Activated naive CD4-positive, alpha-beta T cell treated with anti-CD3 and anti-CD28 coated beads for 36 hours (primary cell): ENCODE measurements at regions of chr4 and their contacts with region 1.

Region 1: DNA sequence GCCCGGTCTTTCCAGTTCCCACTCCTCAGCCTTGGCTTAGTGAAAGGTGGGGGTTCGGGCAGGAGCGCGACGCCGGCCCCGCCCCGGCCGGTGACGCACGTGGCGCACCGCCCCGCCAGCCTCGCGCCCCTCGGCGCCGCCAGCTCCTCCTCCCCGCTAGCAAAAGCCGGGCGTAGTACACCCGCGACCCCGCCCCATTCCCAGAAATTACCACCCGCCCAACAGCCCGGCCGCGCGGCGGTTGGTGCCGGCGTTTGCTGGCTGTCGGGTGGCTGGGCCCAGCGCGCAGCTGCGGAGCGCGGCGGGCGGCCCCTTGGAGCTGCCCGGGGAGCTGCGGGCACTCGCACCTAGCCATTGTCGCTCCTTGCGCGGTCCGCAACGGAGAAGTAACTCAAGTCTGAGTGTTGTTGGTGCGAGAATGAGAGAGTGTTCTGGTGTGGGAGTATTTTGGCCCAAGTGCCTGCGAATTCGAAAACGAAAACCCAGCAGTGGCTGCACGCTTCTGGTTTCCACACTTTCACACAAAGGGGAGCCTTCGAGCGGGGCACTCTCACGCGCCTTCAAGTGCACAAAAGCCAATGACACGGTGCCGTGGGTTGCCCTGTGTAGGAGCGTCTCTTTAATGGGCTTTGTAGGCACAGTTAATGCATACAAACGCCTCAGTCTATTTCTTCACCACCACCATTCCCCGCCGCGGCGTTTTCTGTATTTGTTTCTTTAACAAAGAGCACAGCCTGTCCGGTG is 1.0 kb upstream of the ELF2 start:
- DNase-seq: peak; percentile 95
- H3K4me3 Mint-ChIP-seq: peak overlapping the region; percentile 84
- H3K27ac Mint-ChIP-seq: peak overlapping the region; percentile 63
- H3K4me1 Mint-ChIP-seq: peaks cover 13% of the 10 kb centered on the region
- H3K27me3 Mint-ChIP-seq: peaks cover 5% of the 10 kb centered on the region

Region 2: GRCh38 chr4:139030614-139031235 is 147.3 kb before region 1 on chr4:
- CTCF ChIA-PET with region 1: interaction called, 4 read pairs
- intact Hi-C with region 1: loop called (anchors 5 kb)
- DNase-seq: peak; percentile 90
- H3K4me3 Mint-ChIP-seq: no peak overlapping the region
- H3K27ac Mint-ChIP-seq: no peak overlapping the region
- H3K4me1 Mint-ChIP-seq: peaks cover 11% of the 10 kb centered on the region
- H3K27me3 Mint-ChIP-seq: no peaks in the 10 kb centered on the region

Region 3: GRCh38 chr4:139223682-139224317 is 45.8 kb after region 1 on chr4:
- CTCF ChIA-PET with region 1: no interaction called
- intact Hi-C with region 1: loop called (anchors 2 kb)
- DNase-seq: peak; percentile 52
- H3K4me3 Mint-ChIP-seq: no peak overlapping the region
- H3K27ac Mint-ChIP-seq: no peak overlapping the region
- H3K4me1 Mint-ChIP-seq: peaks cover 15% of the 10 kb centered on the region
- H3K27me3 Mint-ChIP-seq: no peaks in the 10 kb centered on the region

Region 4: DNA sequence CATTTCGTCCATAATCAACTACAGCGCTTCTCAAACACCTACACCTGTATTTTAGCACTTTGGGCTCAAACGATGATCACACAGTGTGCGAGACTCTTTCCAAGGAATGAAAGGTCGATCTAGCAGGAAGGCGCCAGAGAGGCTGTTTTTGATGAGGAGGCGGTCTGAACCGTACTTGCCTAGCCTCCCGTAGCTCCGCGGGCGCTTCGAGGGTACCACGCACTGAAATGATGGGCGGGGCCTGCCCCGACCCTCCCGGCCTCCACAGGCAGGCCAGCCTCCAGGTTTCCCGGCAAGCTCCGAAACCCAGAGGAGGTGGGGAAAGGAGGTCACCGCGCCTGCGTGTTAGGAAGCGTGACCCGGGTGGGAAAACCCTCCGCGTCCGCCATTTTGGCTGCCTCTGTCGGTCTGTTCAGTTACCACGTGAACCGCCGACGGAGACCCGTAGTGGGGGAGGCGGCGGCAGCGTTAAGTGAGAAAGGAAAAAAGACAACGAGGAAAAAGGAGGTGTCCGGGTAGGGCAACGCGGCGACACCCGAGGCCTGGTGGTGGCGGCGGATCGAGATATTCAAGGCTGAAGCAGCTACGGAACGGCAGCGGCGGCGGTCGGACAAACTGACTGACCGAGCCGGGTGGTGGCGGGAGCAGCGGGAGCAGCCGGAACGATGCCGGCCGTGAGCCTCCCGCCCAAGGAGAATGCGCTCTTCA is 123.2 kb after region 1 on chr4 and contains the start of gene NAA15:
- CTCF ChIA-PET with region 1: interaction called, 4 read pairs
- intact Hi-C with region 1: loop called (anchors 1 kb)
- DNase-seq: peak; percentile 98
- H3K4me3 Mint-ChIP-seq: peak within 1 kb of the TSS; percentile 100
- H3K27ac Mint-ChIP-seq: peak within 1 kb of the TSS; percentile 98
- H3K4me1 Mint-ChIP-seq: peaks cover 56% of the 10 kb centered on the region
- H3K27me3 Mint-ChIP-seq: no peaks in the 10 kb centered on the region
- total RNA-seq, gene NAA15: 91.5 to 94.0 TPM

Region 5: DNA sequence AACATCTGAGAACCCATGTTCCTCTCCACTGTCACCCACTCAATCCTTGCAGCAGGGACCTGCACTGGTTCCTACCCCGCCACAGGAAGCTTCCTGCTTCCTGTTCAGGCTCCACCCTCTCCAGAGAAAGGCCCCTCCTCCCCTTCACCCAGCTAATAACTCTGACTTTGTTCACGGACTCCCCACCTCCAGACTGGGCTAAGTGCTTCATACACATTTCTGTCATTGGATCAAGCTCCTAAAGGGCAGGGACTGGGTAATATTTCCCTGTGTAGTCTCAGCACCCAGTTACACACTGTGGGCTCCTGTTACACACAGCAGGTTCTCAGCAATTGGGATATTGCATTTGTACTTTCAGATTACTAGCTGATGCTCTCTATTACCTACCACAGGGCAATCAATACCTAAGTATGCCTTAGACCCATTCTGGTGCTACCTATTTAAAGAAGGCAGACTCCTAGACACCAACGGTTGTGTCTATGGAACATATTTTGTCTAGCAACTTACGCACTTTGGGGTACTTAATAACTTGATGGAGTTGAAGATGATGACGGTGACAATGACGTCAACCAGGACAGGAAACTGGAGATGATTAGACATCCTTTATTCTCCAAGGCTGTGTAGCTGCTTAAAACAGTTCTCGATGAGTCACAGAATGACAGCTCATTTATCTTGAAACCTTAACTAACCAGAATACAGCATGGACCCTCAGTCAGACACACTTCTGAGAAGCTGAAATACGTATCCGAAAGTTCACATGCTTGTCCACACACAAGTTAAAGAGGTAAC is 917.8 kb after region 1 on chr4:
- CTCF ChIA-PET with region 1: no interaction called
- intact Hi-C with region 1: loop called (anchors 10 kb)
- DNase-seq: peak; percentile 91
- H3K4me3 Mint-ChIP-seq: peak overlapping the region; percentile 90
- H3K27ac Mint-ChIP-seq: peak overlapping the region; percentile 99
- H3K4me1 Mint-ChIP-seq: peaks cover 77% of the 10 kb centered on the region
- H3K27me3 Mint-ChIP-seq: no peaks in the 10 kb centered on the region